ENCODE measurements at regions of chrX and their contacts with region 1.

Region 1: DNA sequence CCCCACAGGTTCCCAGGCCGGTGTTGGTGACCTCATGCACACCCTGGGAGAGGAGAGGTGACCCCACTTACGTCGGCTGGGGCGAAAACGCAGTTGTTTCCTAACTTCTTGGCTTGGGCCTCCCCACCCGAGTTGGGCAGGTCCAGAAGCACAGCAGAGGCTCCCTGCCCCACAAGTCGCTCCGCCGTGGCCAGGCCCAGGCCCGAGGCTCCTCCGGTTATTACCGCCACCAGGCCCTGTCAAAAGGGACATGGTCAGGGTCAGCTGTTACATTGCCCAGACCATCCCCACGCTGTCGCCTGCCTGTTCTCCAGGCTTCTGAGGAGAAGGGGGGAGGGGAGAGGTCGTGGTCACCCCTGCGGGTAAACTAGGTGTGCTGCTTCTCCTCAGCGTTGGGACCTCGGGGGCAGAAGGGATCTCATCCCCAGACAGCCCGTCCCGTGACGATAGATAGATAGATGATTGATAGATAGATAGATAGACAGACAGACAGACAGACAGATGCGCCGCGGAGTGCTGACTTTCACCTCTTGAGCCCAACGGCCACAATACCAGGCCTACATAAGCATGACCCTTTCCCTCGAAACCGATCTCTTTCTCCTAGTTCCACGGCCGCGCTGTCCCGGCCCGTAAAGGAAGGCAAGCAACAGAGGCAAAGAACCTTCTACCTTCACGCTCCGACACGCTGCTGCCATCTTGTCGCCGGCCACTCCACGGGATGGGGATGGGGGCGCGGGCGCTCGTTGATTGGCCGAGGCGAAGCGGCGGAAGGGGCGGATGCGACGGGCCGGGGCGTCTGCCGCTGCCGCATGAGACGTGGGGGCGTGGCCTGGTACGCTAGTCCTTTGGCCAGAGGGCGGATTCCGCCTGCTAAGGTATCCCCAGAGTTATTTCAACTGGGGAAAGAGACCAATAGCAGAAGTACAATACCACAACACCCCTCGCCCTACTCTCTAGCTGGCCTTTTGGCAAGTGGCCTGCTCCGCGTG is at the start of gene HSD17B10:
- DNase-seq: peak; percentile 90 to 94 (median 92)
- ATAC-seq: peak; percentile 97 to 100 (median 98)
- H3K4me3 ChIP-seq: peak within 1 kb of the TSS; percentile 36 to 87 (median 66)
- H3K27ac ChIP-seq: peak within 1 kb of the TSS in 10 of 12 donors; percentile 53 to 83 (median 72)
- H3K4me1 ChIP-seq: peaks cover 0 to 19% (median 4%) of the 10 kb centered on the region in 12 donors
- H3K27me3 ChIP-seq: peaks cover 0 to 19% (median 0%) of the 10 kb centered on the region in 9 donors
- CTCF ChIP-seq: no peak
- POLR2A ChIP-seq: peak in 1 of 2 donors; percentile 44
- total RNA-seq, gene HSD17B10: 49.7 to 118 (median 93.2) TPM

Region 2: GRCh38 chrX:53269536-53270107 is 164.3 kb before region 1 on chrX:
- intact Hi-C with region 1: no loop called
- DNase-seq: no peak
- ATAC-seq: no peak
- H3K4me3 ChIP-seq: no peak overlapping the region
- H3K27ac ChIP-seq: no peak overlapping the region
- H3K4me1 ChIP-seq: peaks cover 0 to 26% (median 0%) of the 10 kb centered on the region in 12 donors
- H3K27me3 ChIP-seq: peaks cover 0 to 31% (median 0%) of the 10 kb centered on the region in 9 donors
- CTCF ChIP-seq: no peak
- POLR2A ChIP-seq: no peak

Region 3: DNA sequence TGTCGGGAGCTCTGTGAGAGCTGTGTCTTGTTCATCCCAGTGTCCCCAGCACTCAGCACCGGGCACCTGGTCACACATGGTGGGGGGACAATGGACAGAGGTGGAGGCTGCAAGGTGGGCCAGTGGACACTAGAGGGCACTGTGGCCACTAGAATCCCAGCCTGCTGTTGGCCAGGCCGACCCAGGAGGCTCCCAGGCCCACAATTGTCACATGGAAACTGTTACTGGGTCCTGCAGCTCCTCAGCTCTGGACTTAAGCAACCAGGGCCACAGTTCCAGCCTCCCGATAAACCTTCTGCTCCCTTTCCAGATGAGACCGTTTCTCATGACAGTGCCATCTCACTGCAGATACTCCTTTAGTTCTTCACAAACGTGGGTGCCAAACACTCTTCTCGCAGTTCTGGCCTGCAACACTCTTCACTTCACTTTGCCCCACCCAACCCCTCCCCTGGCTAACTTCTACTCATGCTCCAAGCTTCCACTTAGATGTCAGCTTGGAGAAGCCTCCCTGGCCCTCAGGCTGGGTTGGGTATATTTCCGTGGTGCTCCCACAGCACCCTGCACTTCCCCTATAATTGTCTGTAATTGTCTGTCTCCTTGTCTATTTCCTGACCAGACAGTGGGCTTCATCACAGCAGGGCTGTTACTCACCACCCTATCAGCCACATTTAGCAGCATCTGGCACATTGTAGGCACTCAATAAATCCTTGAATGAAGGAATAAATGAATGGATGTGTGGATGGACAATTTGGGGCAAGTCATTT is 149.1 kb before region 1 on chrX:
- intact Hi-C with region 1: loop called in 3 of 10 experiments (anchors 10 kb)
- DNase-seq: peak; percentile 34 to 74 (median 62)
- ATAC-seq: peak in 3 of 4 donors; percentile 41 to 48 (median 42)
- H3K4me3 ChIP-seq: no peak overlapping the region
- H3K27ac ChIP-seq: peak overlapping the region in 3 of 12 donors; percentile 8 to 16 (median 13)
- H3K4me1 ChIP-seq: peaks cover 0 to 61% (median 22%) of the 10 kb centered on the region in 12 donors
- H3K27me3 ChIP-seq: peaks cover 0 to 35% (median 0%) of the 10 kb centered on the region in 9 donors
- CTCF ChIP-seq: peak; percentile 62 to 91 (median 72)
- POLR2A ChIP-seq: no peak

Region 4: DNA sequence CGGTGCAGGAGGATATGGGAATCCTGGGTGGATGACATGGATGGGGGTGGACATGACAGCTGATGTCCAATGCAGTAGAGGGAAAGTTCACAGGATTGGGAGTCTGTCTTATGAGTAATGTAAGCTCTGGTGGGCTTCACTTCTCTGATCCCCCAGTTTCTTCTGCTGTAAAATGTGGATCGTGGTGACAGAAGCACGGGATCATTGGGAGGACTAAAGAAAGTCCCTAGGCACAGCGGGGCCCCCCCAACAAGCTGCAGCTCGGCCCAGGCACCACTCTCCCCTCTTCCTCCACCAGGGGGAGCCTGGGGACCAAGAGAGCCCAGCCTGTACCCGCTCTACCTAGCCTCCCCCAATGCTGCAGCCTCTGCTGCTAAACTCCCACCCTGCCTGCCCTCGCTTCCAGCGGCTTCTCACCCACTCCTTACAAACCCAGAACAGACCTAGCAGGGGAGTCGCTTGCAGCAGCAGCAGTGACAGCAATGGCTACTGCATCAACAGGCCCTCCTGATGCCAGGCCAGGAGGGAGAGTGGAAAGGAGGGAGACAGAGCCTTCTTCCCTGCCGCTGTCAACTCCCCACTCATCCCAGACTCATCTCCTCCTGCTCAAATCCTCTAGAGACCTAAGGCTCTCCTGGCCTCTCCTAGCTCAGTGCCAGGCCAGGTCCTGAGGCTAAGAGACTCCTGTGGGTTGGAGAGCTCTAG is 116.4 kb before region 1 on chrX:
- intact Hi-C with region 1: loop called in 8 of 10 experiments (anchors 1 to 10 kb)
- DNase-seq: peak; percentile 40 to 73 (median 60)
- ATAC-seq: peak; percentile 74 to 85 (median 78)
- H3K4me3 ChIP-seq: no peak overlapping the region
- H3K27ac ChIP-seq: no peak overlapping the region
- H3K4me1 ChIP-seq: peaks cover 0 to 35% (median 0%) of the 10 kb centered on the region in 12 donors
- H3K27me3 ChIP-seq: peaks cover 0 to 65% (median 0%) of the 10 kb centered on the region in 9 donors
- CTCF ChIP-seq: peak; percentile 54 to 88 (median 70)
- POLR2A ChIP-seq: no peak

Region 5: DNA sequence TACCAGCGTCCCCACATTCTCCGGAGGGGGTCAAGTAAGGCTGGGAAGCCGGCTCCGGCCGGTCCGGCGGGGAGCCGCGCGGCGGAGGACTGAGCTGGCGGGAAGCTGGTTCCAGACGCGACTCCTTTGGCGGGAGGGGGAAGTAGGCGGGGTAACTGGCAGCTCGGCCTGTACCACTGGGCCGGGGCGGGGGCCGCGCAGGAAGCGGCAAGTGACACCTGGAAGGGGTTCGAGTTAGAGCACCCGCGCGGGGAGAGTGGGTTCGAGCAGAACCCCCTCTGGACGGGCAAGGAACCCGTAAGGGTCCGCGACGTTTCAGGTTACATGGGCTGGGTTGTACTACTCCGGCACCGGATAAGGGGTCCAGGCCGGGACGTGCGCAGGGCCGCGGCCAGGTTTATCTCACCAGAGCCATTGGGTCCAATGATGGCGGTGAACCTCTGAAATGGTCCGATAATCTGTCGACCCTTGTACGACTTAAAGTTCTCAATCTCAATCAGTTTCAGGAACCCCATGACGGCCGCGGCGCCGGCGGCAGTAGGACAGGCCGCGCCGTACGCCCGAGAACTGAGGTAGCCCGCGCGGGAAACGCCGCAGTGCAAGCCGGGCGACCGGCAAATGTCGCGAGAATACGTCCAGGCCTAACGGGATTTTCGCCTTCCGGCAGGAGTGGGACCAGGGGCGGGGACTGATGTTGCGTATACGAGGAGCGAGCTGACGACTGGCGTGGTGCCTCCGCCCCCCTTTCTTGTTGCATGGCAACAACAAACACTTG is 11.7 kb before region 1 on chrX and contains the start of gene SMC1A:
- intact Hi-C with region 1: loop called in 1 of 10 experiments (anchors 1 kb)
- DNase-seq: peak; percentile 94 to 99 (median 97)
- ATAC-seq: peak; percentile 97 to 99 (median 98)
- H3K4me3 ChIP-seq: peak within 1 kb of the TSS; percentile 47 to 84 (median 72)
- H3K27ac ChIP-seq: peak within 1 kb of the TSS; percentile 82 to 95 (median 91)
- H3K4me1 ChIP-seq: peaks cover 0 to 23% (median 10%) of the 10 kb centered on the region in 12 donors
- H3K27me3 ChIP-seq: no peaks in the 10 kb centered on the region
- CTCF ChIP-seq: no peak
- POLR2A ChIP-seq: peak in 1 of 2 donors; percentile 57
- total RNA-seq, gene SMC1A: 25.3 to 64.6 (median 36.4) TPM

Region 6: DNA sequence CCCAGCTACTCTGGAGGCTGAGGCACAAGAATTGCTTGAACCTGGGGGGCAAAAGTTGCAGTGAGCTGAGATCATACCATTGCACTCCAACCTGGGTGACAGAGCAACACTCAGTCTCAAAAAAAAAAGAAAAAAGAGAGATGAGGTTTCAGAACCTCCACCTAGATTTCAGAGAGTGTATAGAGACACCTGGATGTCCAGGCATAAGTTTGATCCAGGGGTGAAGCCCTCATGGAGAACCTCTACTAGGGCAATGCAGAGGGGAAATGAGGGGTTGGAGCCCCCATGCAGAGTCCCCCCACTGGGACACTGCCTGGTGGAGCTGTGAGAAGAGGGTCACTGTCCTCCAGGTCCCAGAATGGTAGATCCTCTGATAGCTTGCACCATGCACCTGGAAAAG is 93.1 kb after region 1 on chrX:
- intact Hi-C with region 1: no loop called
- DNase-seq: no peak
- ATAC-seq: no peak
- H3K4me3 ChIP-seq: no peak overlapping the region
- H3K27ac ChIP-seq: no peak overlapping the region
- H3K4me1 ChIP-seq: no peaks in the 10 kb centered on the region
- H3K27me3 ChIP-seq: peaks cover 0 to 4% (median 0%) of the 10 kb centered on the region in 9 donors
- CTCF ChIP-seq: no peak
- POLR2A ChIP-seq: no peak